ENCODE measurements at regions of chr9 and their contacts with region 1.

Region 1: DNA sequence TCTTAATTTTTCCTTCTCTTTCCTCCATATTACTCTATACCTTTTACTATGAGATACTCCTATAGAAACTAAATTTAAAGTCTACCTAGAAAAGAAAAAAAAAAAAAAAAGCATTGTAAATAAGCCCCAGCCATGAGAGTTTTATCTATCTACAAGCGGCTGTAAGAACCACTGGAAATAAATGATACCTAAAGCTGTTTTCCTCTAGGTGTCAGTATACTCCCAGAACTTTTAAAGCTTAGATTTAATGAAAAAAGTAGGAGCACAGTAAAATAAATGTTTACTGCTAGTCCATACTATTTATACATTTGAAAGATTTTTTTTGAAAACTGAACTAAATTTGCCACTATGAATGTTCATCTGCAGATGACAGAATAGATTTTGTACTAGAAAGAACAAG is 26.2 kb downstream of the TYRP1 start:
- DNase-seq: peak; percentile 39
- H3K4me3 ChIP-seq: no peak overlapping the region
- H3K27ac ChIP-seq: no peak overlapping the region
- H3K4me1 ChIP-seq: peaks cover 15% of the 10 kb centered on the region
- H3K27me3 ChIP-seq: no peaks in the 10 kb centered on the region
- CTCF ChIP-seq: peak; percentile 24
- POLR2A ChIP-seq: no peak

Region 2: GRCh38 chr9:12702160-12702758 is 17.2 kb before region 1 on chr9:
- CTCF ChIA-PET with region 1: interaction called, 82 read pairs
- POLR2A ChIA-PET with region 1: no interaction called
- dilution Hi-C with region 1: no loop called
- intact Hi-C with region 1: loop called (anchors 1 kb)
- DNase-seq: peak; percentile 70
- H3K4me3 ChIP-seq: no peak overlapping the region
- H3K27ac ChIP-seq: no peak overlapping the region
- H3K4me1 ChIP-seq: no peaks in the 10 kb centered on the region
- H3K27me3 ChIP-seq: no peaks in the 10 kb centered on the region
- CTCF ChIP-seq: peak; percentile 58 to 62
- POLR2A ChIP-seq: no peak

Region 3: GRCh38 chr9:12813960-12814876 is 94.8 kb after region 1 on chr9:
- CTCF ChIA-PET with region 1: interaction called, 14 read pairs
- POLR2A ChIA-PET with region 1: interaction called, 3 read pairs
- dilution Hi-C with region 1: no loop called
- intact Hi-C with region 1: loop called (anchors 2 kb)
- DNase-seq: peak; percentile 99
- H3K4me3 ChIP-seq: peak overlapping the region in 2 of 3 experiments; percentile 11 to 75
- H3K27ac ChIP-seq: peak overlapping the region; percentile 99
- H3K4me1 ChIP-seq: peaks cover 23% of the 10 kb centered on the region
- H3K27me3 ChIP-seq: no peaks in the 10 kb centered on the region
- CTCF ChIP-seq: peak; percentile 3 to 22
- POLR2A ChIP-seq: no peak

Region 4: DNA sequence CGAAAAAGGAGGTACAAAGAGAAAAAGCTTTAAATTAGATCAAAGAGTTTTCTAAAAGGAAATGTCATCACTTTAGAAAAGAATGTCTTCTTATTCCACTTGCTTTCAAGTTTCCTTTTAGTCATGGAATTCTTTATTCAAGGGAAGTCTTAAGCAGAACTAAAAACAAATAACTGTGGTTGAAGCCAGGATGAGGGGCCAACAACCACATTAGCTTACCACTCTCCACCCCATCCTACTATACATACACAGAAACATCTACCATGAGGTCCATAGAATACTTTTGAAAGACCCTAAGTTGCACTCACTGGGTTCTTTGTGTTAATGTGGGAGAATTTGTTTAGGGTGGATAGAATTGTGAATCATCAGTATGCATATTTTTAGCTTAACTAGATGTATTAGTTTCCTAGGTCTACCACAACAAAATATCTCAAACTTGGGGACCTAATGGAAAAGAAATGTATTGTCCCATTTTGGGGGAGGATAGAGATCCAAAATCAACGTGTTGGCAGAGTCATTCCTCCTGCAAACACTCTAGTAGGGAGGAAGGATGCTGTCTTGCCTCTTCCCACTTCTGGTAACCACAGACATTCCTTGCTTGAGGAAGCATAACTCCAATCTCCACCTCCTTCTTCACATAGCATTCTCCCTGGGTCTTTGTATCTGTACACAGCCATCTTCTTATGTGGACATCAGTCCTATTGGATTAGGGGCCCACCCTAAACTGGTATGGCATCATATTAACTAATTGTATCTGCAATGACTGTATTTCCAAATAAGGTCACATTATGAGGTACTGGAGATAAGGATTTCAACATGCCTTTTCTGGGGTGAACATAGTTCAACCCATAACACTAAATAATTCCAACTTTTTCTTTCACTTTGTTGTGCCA is 294.8 kb after region 1 on chr9:
- CTCF ChIA-PET with region 1: interaction called, 3 read pairs
- POLR2A ChIA-PET with region 1: no interaction called
- dilution Hi-C with region 1: no loop called
- intact Hi-C with region 1: loop called (anchors 5 kb)
- DNase-seq: peak; percentile 69
- H3K4me3 ChIP-seq: no peak overlapping the region
- H3K27ac ChIP-seq: no peak overlapping the region
- H3K4me1 ChIP-seq: no peaks in the 10 kb centered on the region
- H3K27me3 ChIP-seq: no peaks in the 10 kb centered on the region
- CTCF ChIP-seq: no peak
- POLR2A ChIP-seq: no peak

Region 5: DNA sequence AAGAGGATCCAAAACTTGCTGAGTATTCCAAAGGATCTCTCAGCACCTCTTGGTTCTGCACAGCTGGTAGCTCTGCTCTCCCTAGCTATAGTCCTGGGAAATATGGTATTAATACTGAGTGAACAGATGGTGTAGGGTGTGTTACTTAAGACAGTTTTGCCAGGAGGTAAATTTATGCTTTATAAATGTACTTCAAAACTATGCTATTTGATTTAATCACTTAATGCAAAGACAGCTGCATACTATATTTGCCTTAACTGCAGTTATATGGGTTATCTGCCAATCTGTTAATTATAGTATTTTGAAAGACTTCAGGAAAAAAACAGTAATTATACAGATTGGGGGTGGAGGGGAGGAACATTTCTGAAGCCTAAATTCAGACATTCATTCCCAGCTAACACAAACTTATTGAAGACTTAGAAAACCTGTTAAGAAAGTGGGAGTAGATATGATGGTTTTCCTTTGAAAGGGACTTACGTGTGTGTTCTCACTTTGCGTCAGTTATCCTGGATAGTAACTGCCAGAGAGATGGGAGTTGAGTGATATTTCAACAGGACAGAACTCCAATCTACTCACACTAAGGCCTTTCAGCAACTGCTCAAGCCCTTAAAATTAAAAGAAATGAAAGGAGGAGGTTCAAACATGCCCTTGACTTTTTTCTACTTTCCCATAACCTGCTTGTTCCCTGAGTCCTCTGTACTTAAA is 344.7 kb after region 1 on chr9:
- CTCF ChIA-PET with region 1: no interaction called
- POLR2A ChIA-PET with region 1: no interaction called
- dilution Hi-C with region 1: no loop called
- intact Hi-C with region 1: no loop called
- DNase-seq: no peak
- H3K4me3 ChIP-seq: no peak overlapping the region
- H3K27ac ChIP-seq: no peak overlapping the region
- H3K4me1 ChIP-seq: no peaks in the 10 kb centered on the region
- H3K27me3 ChIP-seq: peaks cover 5% of the 10 kb centered on the region in 2 experiments
- CTCF ChIP-seq: no peak
- POLR2A ChIP-seq: no peak

Region 6: GRCh38 chr9:13267743-13268142 is 548.3 kb after region 1 on chr9:
- CTCF ChIA-PET with region 1: no interaction called
- POLR2A ChIA-PET with region 1: no interaction called
- dilution Hi-C with region 1: no loop called
- intact Hi-C with region 1: loop called (anchors 5 kb)
- DNase-seq: peak; percentile 97
- H3K4me3 ChIP-seq: peak overlapping the region in 1 of 3 experiments; percentile 48
- H3K27ac ChIP-seq: peak overlapping the region; percentile 88
- H3K4me1 ChIP-seq: peaks cover 62% of the 10 kb centered on the region
- H3K27me3 ChIP-seq: no peaks in the 10 kb centered on the region
- CTCF ChIP-seq: no peak
- POLR2A ChIP-seq: peak; percentile 69